GM12878 (cell line): ENCODE measurements at regions of chr18 and their contacts with region 1.

Region 1: GRCh38 chr18:7760967-7761948 is 194.1 kb downstream of the PTPRM start:
- DNase-seq: no peak
- ATAC-seq: no peak
- H3K4me3 ChIP-seq: no peak overlapping the region
- H3K27ac ChIP-seq: no peak overlapping the region
- H3K4me1 ChIP-seq: no peaks in the 10 kb centered on the region
- H3K27me3 ChIP-seq: no peaks in the 10 kb centered on the region
- CTCF ChIP-seq: no peak
- EP300 ChIP-seq: no peak
- POLR2A ChIP-seq: no peak
- RAD21 ChIP-seq: no peak

Region 2: GRCh38 chr18:7822435-7823367 is 61.4 kb after region 1 on chr18:
- CTCF ChIA-PET with region 1: no interaction called
- POLR2A ChIA-PET with region 1: no interaction called
- RAD21 ChIA-PET with region 1: no interaction called
- SMC1A ChIA-PET with region 1: no interaction called
- in situ Hi-C with region 1: loop called (anchors 10 kb)
- intact Hi-C with region 1: no loop called
- DNase-seq: no peak
- ATAC-seq: peak; percentile 63
- H3K4me3 ChIP-seq: no peak overlapping the region
- H3K27ac ChIP-seq: no peak overlapping the region
- H3K4me1 ChIP-seq: no peaks in the 10 kb centered on the region
- H3K27me3 ChIP-seq: no peaks in the 10 kb centered on the region; a peak in 1 of 4 replicates
- CTCF ChIP-seq: no peak
- EP300 ChIP-seq: no peak
- POLR2A ChIP-seq: no peak
- RAD21 ChIP-seq: no peak

Region 3: DNA sequence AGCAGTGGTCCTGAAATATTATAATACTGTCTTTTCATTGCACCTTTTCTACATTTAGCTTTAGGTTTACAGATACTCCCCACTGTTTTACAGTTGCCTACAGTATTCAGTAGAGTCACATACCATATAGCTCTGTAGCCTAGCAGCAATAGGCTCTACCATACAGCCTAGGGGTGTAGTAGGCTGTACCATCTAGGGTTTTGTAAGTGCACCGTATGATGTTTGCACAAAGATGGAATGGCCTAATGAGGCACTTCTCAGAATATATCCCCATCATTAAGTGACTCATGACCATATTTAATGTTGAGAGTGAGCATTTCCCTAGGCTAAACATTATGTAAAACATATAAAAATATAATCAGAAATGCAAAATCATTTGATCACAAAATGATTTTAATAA is 336.7 kb after region 1 on chr18:
- CTCF ChIA-PET with region 1: no interaction called
- POLR2A ChIA-PET with region 1: no interaction called
- RAD21 ChIA-PET with region 1: no interaction called
- SMC1A ChIA-PET with region 1: no interaction called
- in situ Hi-C with region 1: no loop called
- intact Hi-C with region 1: no loop called
- DNase-seq: no peak
- ATAC-seq: no peak
- H3K4me3 ChIP-seq: no peak overlapping the region
- H3K27ac ChIP-seq: no peak overlapping the region
- H3K4me1 ChIP-seq: no peaks in the 10 kb centered on the region
- H3K27me3 ChIP-seq: no peaks in the 10 kb centered on the region
- CTCF ChIP-seq: no peak
- EP300 ChIP-seq: no peak
- POLR2A ChIP-seq: no peak
- RAD21 ChIP-seq: no peak